ENCODE measurements at regions of chr7 and their contacts with region 1.

Region 1: GRCh38 chr7:64625114-64626082 is 40.5 kb upstream of the ZNF107 start:
- DNase-seq: peak; percentile 48 to 58 (median 53)
- ATAC-seq: peak; percentile 66; the same call in 2 of the 3 replicates
- H3K4me3 ChIP-seq: no peak overlapping the region
- H3K27ac ChIP-seq: no peak overlapping the region
- H3K4me1 ChIP-seq: no peaks in the 10 kb centered on the region
- H3K27me3 ChIP-seq: no peaks in the 10 kb centered on the region
- CTCF ChIP-seq: peak; percentile 38 to 67 (median 61); a peak in 5 of 6 replicates
- EP300 ChIP-seq: no peak
- POLR2A ChIP-seq: no peak
- RAD21 ChIP-seq: peak; percentile 42 to 77; a peak in 3 of 4 replicates

Region 2: DNA sequence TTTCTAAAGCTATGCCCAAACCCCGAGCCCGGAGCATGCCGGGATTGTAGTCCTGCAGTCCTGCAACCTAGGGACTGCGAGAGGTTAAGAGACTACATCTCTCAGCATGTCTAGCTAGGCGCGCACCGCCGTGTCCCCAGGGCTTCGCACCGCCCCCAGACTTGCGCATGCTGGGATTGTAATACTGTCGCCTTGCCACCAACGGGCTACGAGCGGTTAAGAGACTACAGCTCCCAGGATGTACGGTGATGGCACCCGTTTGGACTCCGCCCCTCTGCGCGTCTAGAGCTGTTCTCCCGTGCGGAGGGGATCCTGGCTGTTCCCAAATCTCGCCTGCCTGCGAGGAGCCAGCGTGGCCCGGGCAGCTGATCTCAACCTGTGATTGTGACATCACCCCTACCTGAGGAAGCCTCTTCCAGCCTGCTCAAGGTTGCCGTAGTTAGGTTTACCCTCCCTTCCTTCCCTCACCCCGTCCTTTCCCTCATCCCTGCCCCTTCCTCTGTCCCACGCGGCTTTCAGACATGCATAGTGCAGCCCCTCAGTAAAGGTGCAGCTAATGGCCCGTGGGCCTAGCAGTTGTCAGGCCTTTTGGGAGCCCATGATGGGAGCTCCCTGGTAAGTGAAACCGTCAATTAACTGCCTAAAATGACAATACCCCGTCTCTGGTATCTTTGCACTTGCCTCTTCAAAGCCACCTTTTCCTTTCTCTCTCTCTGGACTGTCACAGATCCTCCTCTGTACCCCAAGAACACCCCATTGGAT is 318.0 kb before region 1 on chr7:
- CTCF ChIA-PET with region 1: no interaction called
- POLR2A ChIA-PET with region 1: no interaction called
- in situ Hi-C with region 1: no loop called
- intact Hi-C with region 1: loop called (anchors 5 kb)
- DNase-seq: peak; percentile 39 to 88 (median 46)
- ATAC-seq: peak; percentile 97
- H3K4me3 ChIP-seq: peak overlapping the region; percentile 37
- H3K27ac ChIP-seq: peak overlapping the region; percentile 54; the same call in 2 of the 3 replicates
- H3K4me1 ChIP-seq: peaks cover 0 to 3% of the 10 kb centered on the region in 2 experiments; a peak in 3 of 5 replicates
- H3K27me3 ChIP-seq: no peaks in the 10 kb centered on the region
- CTCF ChIP-seq: no peak
- EP300 ChIP-seq: no peak
- POLR2A ChIP-seq: 0 out of 2 replicates have a peak, but pooled peaks have one; percentile 39
- RAD21 ChIP-seq: no peak

Region 3: GRCh38 chr7:65225422-65226006 is 600.1 kb after region 1 on chr7:
- CTCF ChIA-PET with region 1: no interaction called
- POLR2A ChIA-PET with region 1: no interaction called
- in situ Hi-C with region 1: no loop called
- intact Hi-C with region 1: loop called (anchors 10 kb)
- DNase-seq: no peak
- ATAC-seq: no peak
- H3K4me3 ChIP-seq: no peak overlapping the region
- H3K27ac ChIP-seq: no peak overlapping the region
- H3K4me1 ChIP-seq: no peaks in the 10 kb centered on the region
- H3K27me3 ChIP-seq: no peaks in the 10 kb centered on the region
- CTCF ChIP-seq: no peak
- EP300 ChIP-seq: no peak
- POLR2A ChIP-seq: no peak
- RAD21 ChIP-seq: no peak

Region 4: GRCh38 chr7:65307651-65308299 is 682.4 kb after region 1 on chr7:
- CTCF ChIA-PET with region 1: no interaction called
- POLR2A ChIA-PET with region 1: no interaction called
- in situ Hi-C with region 1: loop called (anchors 25 kb)
- intact Hi-C with region 1: loop called (anchors 10 kb)
- DNase-seq: peak; percentile 70 to 82 (median 74)
- ATAC-seq: peak; percentile 96
- H3K4me3 ChIP-seq: no peak overlapping the region
- H3K27ac ChIP-seq: no peak overlapping the region
- H3K4me1 ChIP-seq: peaks cover 0 to 2% of the 10 kb centered on the region in 2 experiments; a peak in 1 of 5 replicates
- H3K27me3 ChIP-seq: no peaks in the 10 kb centered on the region
- CTCF ChIP-seq: peak; percentile 85 to 95 (median 91)
- EP300 ChIP-seq: no peak
- POLR2A ChIP-seq: no peak
- RAD21 ChIP-seq: peak; percentile 89 to 92